B cell (primary cell): ENCODE measurements at regions of chr12 and their contacts with region 1.

Region 1: GRCh38 chr12:12008931-12009611 is 61.7 kb upstream of the BCL2L14 start:
- DNase-seq: peak; percentile 26
- ATAC-seq: peak; percentile 59
- H3K4me3 ChIP-seq: no peak overlapping the region
- H3K4me3 Mint-ChIP-seq: peak overlapping the region; percentile 39
- H3K27ac ChIP-seq: no peak overlapping the region
- H3K27ac Mint-ChIP-seq: peak overlapping the region; percentile 73
- H3K4me1 ChIP-seq: peaks cover 46 to 48% of the 10 kb centered on the region in 2 donors
- H3K4me1 Mint-ChIP-seq: peaks cover 61% of the 10 kb centered on the region
- H3K27me3 ChIP-seq: no peaks in the 10 kb centered on the region
- H3K27me3 Mint-ChIP-seq: no peaks in the 10 kb centered on the region
- CTCF ChIP-seq: no peak

Region 2: GRCh38 chr12:11758510-11759493 is 250.3 kb before region 1 on chr12:
- CTCF ChIA-PET with region 1: no interaction called
- POLR2A ChIA-PET with region 1: no interaction called
- intact Hi-C with region 1: loop called (anchors 10 kb)
- DNase-seq: peak; percentile 73
- ATAC-seq: peak; percentile 78
- H3K4me3 ChIP-seq: peak overlapping the region in 2 of 5 experiments; percentile 18 to 28
- H3K4me3 Mint-ChIP-seq: peak overlapping the region; percentile 74
- H3K27ac ChIP-seq: peak overlapping the region; percentile 68 to 81
- H3K27ac Mint-ChIP-seq: peak overlapping the region; percentile 97
- H3K4me1 ChIP-seq: peaks cover 49 to 56% of the 10 kb centered on the region in 2 donors
- H3K4me1 Mint-ChIP-seq: peaks cover 67% of the 10 kb centered on the region
- H3K27me3 ChIP-seq: no peaks in the 10 kb centered on the region
- H3K27me3 Mint-ChIP-seq: no peaks in the 10 kb centered on the region
- CTCF ChIP-seq: no peak

Region 3: GRCh38 chr12:11991604-11992003 is 17.5 kb before region 1 on chr12:
- CTCF ChIA-PET with region 1: no interaction called
- POLR2A ChIA-PET with region 1: no interaction called
- intact Hi-C with region 1: no loop called
- DNase-seq: no peak
- ATAC-seq: no peak
- H3K4me3 ChIP-seq: no peak overlapping the region
- H3K4me3 Mint-ChIP-seq: no peak overlapping the region
- H3K27ac ChIP-seq: no peak overlapping the region
- H3K27ac Mint-ChIP-seq: no peak overlapping the region
- H3K4me1 ChIP-seq: no peaks in the 10 kb centered on the region
- H3K4me1 Mint-ChIP-seq: no peaks in the 10 kb centered on the region
- H3K27me3 ChIP-seq: no peaks in the 10 kb centered on the region
- H3K27me3 Mint-ChIP-seq: no peaks in the 10 kb centered on the region
- CTCF ChIP-seq: no peak

Region 4: DNA sequence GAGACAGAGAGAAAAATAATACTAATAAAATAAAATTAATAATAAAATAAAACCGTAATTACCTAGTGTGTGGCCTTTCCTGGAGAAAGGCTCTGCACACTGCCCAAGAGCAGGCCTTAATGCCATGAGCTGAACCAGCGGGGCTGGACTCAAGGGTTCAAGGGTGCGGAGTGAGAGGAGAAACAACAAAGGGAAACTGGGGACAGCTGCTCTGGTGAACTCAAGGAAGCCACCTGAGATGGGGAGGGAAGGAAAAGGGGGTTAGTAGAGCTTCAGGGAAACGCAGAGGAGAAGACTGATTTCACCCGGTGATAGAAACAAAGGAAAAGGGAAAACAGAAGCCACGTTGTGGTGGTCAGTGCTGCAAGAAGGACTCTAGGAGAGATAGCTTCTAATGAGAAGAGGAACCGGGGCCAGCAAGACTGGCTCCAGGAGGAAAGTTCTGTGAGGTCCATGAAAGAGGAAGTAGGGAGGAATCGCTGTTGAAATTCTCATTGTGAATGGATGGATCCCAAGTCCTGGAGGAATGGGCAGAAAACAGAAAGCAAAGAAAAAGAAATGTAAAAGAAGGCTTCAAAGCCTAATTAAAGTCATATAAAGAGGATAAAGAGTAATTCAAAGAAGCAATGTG is 13.3 kb after region 1 on chr12:
- CTCF ChIA-PET with region 1: no interaction called
- POLR2A ChIA-PET with region 1: no interaction called
- intact Hi-C with region 1: loop called (anchors 1 kb)
- DNase-seq: no peak
- ATAC-seq: no peak
- H3K4me3 ChIP-seq: no peak overlapping the region
- H3K4me3 Mint-ChIP-seq: no peak overlapping the region
- H3K27ac ChIP-seq: no peak overlapping the region
- H3K27ac Mint-ChIP-seq: no peak overlapping the region
- H3K4me1 ChIP-seq: peaks cover 33 to 36% of the 10 kb centered on the region in 2 donors
- H3K4me1 Mint-ChIP-seq: peaks cover 41% of the 10 kb centered on the region
- H3K27me3 ChIP-seq: no peaks in the 10 kb centered on the region
- H3K27me3 Mint-ChIP-seq: no peaks in the 10 kb centered on the region
- CTCF ChIP-seq: no peak

Region 5: DNA sequence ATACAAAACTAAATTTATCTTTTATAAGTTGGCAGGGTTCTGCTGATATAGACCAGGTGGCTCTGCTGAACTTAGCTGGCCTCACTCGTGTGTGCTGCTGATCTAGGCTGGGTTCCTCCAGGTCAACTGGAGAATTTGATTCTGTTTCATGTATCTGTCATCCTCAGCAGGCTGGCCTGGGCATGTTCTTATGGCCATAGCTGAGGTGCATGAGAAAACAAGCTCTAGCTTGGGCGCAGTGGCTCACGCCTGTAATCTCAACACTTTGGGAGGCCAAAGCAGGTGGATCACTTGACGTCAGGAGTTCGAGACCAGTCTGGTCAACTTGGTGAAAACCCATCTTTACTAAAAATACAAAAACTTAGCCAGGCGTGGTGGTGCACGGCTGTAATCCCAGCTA is 37.3 kb after region 1 on chr12:
- CTCF ChIA-PET with region 1: no interaction called
- POLR2A ChIA-PET with region 1: no interaction called
- intact Hi-C with region 1: no loop called
- DNase-seq: no peak
- ATAC-seq: no peak
- H3K4me3 ChIP-seq: no peak overlapping the region
- H3K4me3 Mint-ChIP-seq: no peak overlapping the region
- H3K27ac ChIP-seq: no peak overlapping the region
- H3K27ac Mint-ChIP-seq: no peak overlapping the region
- H3K4me1 ChIP-seq: no peaks in the 10 kb centered on the region
- H3K4me1 Mint-ChIP-seq: no peaks in the 10 kb centered on the region
- H3K27me3 ChIP-seq: peaks cover 0 to 3% (median 0%) of the 10 kb centered on the region in 4 experiments
- H3K27me3 Mint-ChIP-seq: peaks cover 5% of the 10 kb centered on the region
- CTCF ChIP-seq: no peak